CD4-positive, alpha-beta T cell (primary cell): ENCODE measurements at regions of chr11 and their contacts with region 1.

Region 1: GRCh38 chr11:30322826-30323710 is at the start of gene ARL14EP:
- DNase-seq: peak; percentile 75 to 93 (median 86)
- ATAC-seq: peak; percentile 82
- H3K4me3 ChIP-seq: peak within 1 kb of the TSS; percentile 89
- H3K4me3 Mint-ChIP-seq: peak within 1 kb of the TSS; percentile 98
- H3K27ac ChIP-seq: peak within 1 kb of the TSS; percentile 70 to 81
- H3K27ac Mint-ChIP-seq: peak within 1 kb of the TSS; percentile 97
- H3K4me1 ChIP-seq: peaks cover 22% of the 10 kb centered on the region
- H3K4me1 Mint-ChIP-seq: peaks cover 54% of the 10 kb centered on the region
- H3K27me3 ChIP-seq: no peaks in the 10 kb centered on the region
- H3K27me3 Mint-ChIP-seq: peaks cover 17% of the 10 kb centered on the region
- CTCF ChIP-seq: no peak
- total RNA-seq, gene ARL14EP: 48.1 to 49.7 TPM

Region 2: DNA sequence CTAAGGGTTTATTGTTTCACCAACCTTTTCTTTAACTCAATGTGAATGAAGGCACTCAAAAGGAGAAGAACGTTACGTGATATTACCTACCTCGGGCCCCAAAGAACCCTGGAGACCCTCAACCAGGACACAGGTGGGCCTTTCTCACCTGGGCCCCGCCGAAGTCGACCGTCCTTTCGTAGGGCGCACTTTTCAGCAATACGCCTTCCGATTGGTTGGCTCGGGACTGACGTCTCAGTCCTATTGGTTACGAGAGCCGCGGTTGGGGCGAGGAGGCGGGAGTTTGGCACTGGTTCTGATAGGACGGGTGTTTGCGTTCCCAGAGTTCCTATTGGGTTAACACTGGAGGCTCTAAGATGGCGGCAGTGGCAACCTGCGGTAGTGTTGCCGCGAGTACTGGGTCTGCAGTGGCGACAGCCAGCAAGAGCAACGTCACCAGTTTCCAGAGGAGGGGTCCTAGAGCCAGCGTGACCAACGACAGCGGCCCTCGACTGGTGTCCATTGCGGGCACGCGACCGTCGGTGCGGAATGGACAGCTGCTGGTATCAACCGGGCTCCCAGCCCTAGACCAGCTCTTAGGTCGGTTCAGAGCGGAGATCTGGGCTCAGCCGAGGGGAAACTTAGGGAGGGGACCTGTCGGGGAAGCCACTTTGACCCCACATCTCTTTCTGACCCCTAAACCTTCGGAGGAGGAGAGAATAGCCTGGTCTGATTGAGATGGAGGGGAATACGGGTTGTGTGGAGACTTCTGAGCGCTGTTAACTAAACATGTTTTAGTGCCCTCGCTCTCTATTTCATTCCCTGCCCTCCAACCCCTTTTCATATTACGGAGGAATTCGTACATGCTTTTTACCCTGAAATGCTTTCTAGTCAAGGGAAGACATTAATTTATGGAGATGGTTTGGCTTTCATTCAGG is 1186.6 kb after region 1 on chr11 and contains the starts of genes ELP4 and IMMP1L:
- CTCF ChIA-PET with region 1: no interaction called
- POLR2A ChIA-PET with region 1: no interaction called
- intact Hi-C with region 1: loop called in 1 of 2 experiments (anchors 10 kb)
- DNase-seq: peak; percentile 91 to 97 (median 93)
- ATAC-seq: peak; percentile 98
- H3K4me3 ChIP-seq: peak within 1 kb of the TSS; percentile 86
- H3K4me3 Mint-ChIP-seq: peak within 1 kb of the TSS; percentile 94
- H3K27ac ChIP-seq: peak within 1 kb of the TSS; percentile 82 to 87
- H3K27ac Mint-ChIP-seq: peak within 1 kb of the TSS; percentile 92
- H3K4me1 ChIP-seq: peaks cover 2% of the 10 kb centered on the region
- H3K4me1 Mint-ChIP-seq: peaks cover 63% of the 10 kb centered on the region
- H3K27me3 ChIP-seq: no peaks in the 10 kb centered on the region
- H3K27me3 Mint-ChIP-seq: no peaks in the 10 kb centered on the region
- CTCF ChIP-seq: no peak
- total RNA-seq, gene ELP4: 9.5 to 10.3 TPM
- total RNA-seq, gene IMMP1L: 6.0 to 6.9 TPM

Region 3: GRCh38 chr11:32090545-32091373 is 1767.7 kb after region 1 on chr11 and contains the start of gene RCN1:
- CTCF ChIA-PET with region 1: no interaction called
- POLR2A ChIA-PET with region 1: no interaction called
- intact Hi-C with region 1: loop called (anchors 5 kb)
- DNase-seq: peak in 11 of 14 experiments; percentile 8 to 56 (median 19)
- ATAC-seq: peak; percentile 45
- H3K4me3 ChIP-seq: peak within 1 kb of the TSS; percentile 68
- H3K4me3 Mint-ChIP-seq: peak within 1 kb of the TSS; percentile 86
- H3K27ac ChIP-seq: peak within 1 kb of the TSS in 1 of 2 donors; percentile 7
- H3K27ac Mint-ChIP-seq: peak within 1 kb of the TSS; percentile 78
- H3K4me1 ChIP-seq: peaks cover 19% of the 10 kb centered on the region
- H3K4me1 Mint-ChIP-seq: peaks cover 17% of the 10 kb centered on the region
- H3K27me3 ChIP-seq: no peaks in the 10 kb centered on the region
- H3K27me3 Mint-ChIP-seq: peaks cover 23% of the 10 kb centered on the region
- CTCF ChIP-seq: no peak
- total RNA-seq, gene RCN1: 7.4 to 9.1 TPM